ENCODE measurements at regions of chr3 and their contacts with region 1.

Region 1: DNA sequence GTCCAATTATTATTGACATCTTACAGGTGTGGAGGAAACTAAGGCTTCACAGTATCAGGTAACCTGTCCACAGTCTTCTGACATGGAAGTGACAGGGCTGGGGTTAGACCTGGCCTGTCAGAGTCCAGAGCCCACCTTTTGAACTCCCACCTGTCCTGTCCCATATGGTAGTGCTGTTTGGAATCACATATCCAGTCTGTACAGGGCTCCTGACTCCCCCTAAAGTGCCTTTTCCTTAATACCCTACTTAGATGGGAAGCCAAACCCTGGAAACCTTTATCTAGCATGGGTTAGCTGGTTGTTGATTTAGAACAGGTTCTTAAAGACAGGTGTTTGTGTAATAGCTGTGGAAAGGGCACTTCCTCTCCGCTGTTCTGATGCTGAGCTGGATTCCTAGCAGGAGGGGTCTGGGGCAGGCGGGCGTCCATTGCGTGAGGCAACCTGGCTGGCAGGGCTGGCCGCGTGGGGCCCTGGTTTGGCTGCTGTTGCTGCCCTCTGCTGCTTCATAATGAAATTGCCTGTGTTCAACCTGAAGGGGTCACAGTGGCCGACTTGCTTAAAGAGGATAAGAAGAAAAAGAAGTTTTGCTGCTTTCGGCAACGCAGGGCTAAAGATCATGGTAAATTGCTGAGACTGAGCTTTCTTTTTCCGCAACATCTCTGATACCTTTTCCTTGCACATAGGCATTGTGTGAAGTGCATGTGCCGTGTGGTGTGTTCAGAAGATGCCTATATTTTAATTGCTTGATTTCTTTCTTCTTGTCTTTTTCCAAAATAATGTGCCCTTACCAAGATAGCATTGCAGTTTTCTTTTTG is 136.2 kb downstream of the CHDH start:
- DNase-seq: peak; percentile 76 to 85
- ATAC-seq: peak; percentile 78
- H3K4me3 ChIP-seq: no peak overlapping the region
- H3K27ac ChIP-seq: no peak overlapping the region
- H3K4me1 ChIP-seq: no peaks in the 10 kb centered on the region
- H3K27me3 ChIP-seq: no peaks in the 10 kb centered on the region

Region 2: DNA sequence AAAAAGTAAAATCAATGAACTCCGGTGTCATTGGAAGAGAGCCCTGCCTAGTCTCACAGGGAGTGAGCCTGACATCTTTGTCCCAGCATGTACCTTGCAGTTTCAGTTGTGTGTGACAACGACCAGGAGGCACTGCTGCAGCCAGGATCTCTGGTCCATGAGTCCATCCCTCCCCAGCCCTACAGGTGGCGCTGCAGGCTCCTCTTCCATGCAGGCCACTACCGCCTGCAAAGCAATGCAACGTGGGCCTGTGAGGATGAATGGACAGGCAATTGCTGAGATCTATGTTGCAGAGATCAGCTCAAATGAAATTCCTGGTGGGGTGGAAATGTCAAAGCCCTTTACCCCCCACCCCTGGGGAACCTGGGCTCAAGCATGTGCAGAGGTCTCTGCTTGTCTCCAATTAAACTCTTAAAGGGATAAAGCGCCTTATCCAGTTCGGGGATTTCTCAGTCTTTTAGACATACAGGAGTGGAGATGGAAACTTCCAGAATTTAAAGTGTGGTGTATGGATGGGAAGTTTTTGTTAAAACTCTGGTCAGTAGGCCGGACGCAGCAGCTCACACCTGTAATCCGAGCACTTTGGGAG is 490.1 kb before region 1 on chr3:
- intact Hi-C with region 1: loop called in 1 of 2 experiments (anchors 5 kb)
- DNase-seq: peak; percentile 90 to 95
- ATAC-seq: peak; percentile 82
- H3K4me3 ChIP-seq: no peak overlapping the region
- H3K27ac ChIP-seq: no peak overlapping the region
- H3K4me1 ChIP-seq: no peaks in the 10 kb centered on the region
- H3K27me3 ChIP-seq: no peaks in the 10 kb centered on the region

Region 3: DNA sequence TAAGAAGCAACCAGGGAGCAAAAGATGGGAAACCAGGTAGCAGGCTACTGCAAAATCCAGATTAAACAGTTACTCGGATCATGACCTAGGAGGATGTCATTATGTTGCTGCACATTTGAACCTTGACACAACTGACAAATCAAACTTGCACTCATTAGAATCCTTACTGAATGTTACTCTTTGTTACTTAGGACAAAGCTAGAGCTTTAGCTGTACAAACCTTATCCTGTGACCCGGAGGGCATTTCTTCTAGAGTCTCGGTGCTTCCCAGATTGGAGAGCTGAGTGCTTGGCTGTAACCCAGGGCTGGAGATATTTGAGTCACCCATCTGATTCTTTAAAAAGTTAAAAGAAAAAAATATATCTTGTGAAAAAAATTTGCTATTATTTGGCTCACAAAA is 406.1 kb before region 1 on chr3:
- intact Hi-C with region 1: loop called (anchors 2 kb)
- DNase-seq: no peak
- ATAC-seq: no peak
- H3K4me3 ChIP-seq: no peak overlapping the region
- H3K27ac ChIP-seq: peak overlapping the region in 1 of 2 donors; percentile 82
- H3K4me1 ChIP-seq: peaks cover 0 to 2% of the 10 kb centered on the region in 2 donors
- H3K27me3 ChIP-seq: no peaks in the 10 kb centered on the region

Region 4: GRCh38 chr3:53375019-53375418 is 335.0 kb before region 1 on chr3:
- intact Hi-C with region 1: loop called in 1 of 2 experiments (anchors 10 kb)
- DNase-seq: peak; percentile 70 to 80
- ATAC-seq: no peak
- H3K4me3 ChIP-seq: no peak overlapping the region
- H3K27ac ChIP-seq: no peak overlapping the region
- H3K4me1 ChIP-seq: no peaks in the 10 kb centered on the region
- H3K27me3 ChIP-seq: no peaks in the 10 kb centered on the region

Region 5: DNA sequence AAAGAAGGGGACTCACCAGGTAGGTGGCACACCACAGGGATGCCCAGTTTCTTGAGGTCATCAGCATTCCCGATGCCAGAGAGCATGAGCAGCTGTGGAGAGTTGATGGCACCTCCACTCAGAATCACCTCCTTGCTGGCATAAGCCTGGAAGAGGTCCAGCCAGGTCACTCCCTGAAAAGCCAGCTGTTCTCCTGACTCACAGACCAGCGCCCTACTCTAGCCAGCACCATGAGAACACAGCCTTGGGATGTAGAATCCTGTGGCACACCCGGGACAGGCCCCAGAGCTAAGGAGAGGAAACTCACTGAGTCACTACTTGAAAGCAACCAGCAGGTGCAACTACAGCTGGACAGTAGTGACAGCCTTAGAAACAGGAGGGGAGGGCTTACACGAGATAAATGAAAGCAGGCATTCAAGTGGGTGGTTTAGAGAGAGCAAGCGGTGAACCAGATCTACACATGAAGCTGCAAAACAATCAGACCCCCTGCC is 111.6 kb after region 1 on chr3:
- intact Hi-C with region 1: no loop called
- DNase-seq: no peak
- ATAC-seq: no peak
- H3K4me3 ChIP-seq: no peak overlapping the region
- H3K27ac ChIP-seq: no peak overlapping the region
- H3K4me1 ChIP-seq: no peaks in the 10 kb centered on the region
- H3K27me3 ChIP-seq: no peaks in the 10 kb centered on the region

Region 6: GRCh38 chr3:53941956-53942355 is 231.9 kb after region 1 on chr3:
- intact Hi-C with region 1: no loop called
- DNase-seq: no peak
- ATAC-seq: no peak
- H3K4me3 ChIP-seq: no peak overlapping the region
- H3K27ac ChIP-seq: no peak overlapping the region
- H3K4me1 ChIP-seq: no peaks in the 10 kb centered on the region
- H3K27me3 ChIP-seq: no peaks in the 10 kb centered on the region

Measured in aorta (tissue), 5 donors.